Activated CD8-positive, alpha-beta T cell treated with anti-CD3 and anti-CD28 coated beads for 36 hours (primary cell): ENCODE measurements at regions of chr22 and their contacts with region 1.

Region 1: DNA sequence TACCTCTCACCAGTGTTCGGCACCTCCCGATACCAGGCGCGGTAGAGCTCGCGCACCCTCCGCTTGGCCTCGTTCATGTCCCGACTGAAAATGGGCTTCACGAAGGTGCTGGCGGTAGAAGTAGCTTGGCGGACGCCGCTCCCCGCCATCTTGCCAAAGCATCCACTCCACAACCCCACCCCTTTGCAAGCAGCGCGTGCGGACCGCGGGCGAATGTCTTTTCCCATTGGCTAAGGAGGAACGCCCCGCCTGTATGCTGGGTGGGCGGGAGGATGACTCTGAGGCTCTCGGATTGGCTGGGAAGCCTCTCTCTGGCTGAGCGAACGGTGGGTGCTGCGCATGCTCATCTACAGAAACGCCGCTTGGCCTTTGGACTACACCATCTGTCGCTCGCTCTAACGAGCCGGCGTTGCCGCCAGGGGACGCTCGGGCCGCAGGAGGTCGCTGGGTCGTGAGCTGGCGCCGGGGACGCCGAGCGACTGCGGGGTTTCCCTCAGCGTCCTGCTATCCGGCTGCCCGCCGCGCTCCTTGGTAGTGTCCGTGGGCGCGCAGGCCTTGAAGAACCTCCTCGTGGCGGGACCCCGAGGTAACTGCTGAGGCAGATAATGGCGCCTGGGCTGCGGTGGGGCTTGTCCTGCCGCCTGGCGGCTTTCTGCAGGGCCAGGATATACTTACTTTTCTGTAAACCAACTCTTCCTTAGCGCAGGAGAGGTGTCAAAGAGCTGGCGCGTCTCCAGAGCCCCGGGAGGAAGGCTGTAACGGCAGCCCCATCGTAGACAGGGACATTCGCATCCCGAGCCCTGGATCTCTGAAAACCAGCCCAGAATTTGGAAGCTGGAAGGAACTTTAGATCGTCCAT is at the start of gene NDUFA6:
- DNase-seq: peak; percentile 99
- ATAC-seq: peak; percentile 96
- H3K4me3 Mint-ChIP-seq: peak within 1 kb of the TSS; percentile 85
- H3K27ac Mint-ChIP-seq: peak within 1 kb of the TSS; percentile 99
- H3K4me1 Mint-ChIP-seq: peaks cover 28% of the 10 kb centered on the region
- H3K27me3 Mint-ChIP-seq: no peaks in the 10 kb centered on the region
- CTCF ChIP-seq: peak; percentile 83
- total RNA-seq, gene NDUFA6: 92.8 to 93.8 TPM

Region 2: GRCh38 chr22:41966607-41967240 is 124.1 kb before region 1 on chr22:
- CTCF ChIA-PET with region 1: interaction called, 10 read pairs
- POLR2A ChIA-PET with region 1: interaction called, 3 read pairs
- intact Hi-C with region 1: no loop called
- DNase-seq: peak; percentile 65
- ATAC-seq: peak; percentile 84
- H3K4me3 Mint-ChIP-seq: no peak overlapping the region
- H3K27ac Mint-ChIP-seq: no peak overlapping the region
- H3K4me1 Mint-ChIP-seq: no peaks in the 10 kb centered on the region
- H3K27me3 Mint-ChIP-seq: no peaks in the 10 kb centered on the region
- CTCF ChIP-seq: peak; percentile 28

Region 3: GRCh38 chr22:41992496-41992895 is 98.3 kb before region 1 on chr22:
- CTCF ChIA-PET with region 1: no interaction called
- POLR2A ChIA-PET with region 1: no interaction called
- intact Hi-C with region 1: no loop called
- DNase-seq: no peak
- ATAC-seq: no peak
- H3K4me3 Mint-ChIP-seq: no peak overlapping the region
- H3K27ac Mint-ChIP-seq: no peak overlapping the region
- H3K4me1 Mint-ChIP-seq: no peaks in the 10 kb centered on the region
- H3K27me3 Mint-ChIP-seq: no peaks in the 10 kb centered on the region
- CTCF ChIP-seq: no peak

Region 4: GRCh38 chr22:42079319-42080251 is 11.2 kb before region 1 on chr22 and contains the start of gene SMDT1:
- CTCF ChIA-PET with region 1: interaction called, 9 read pairs
- POLR2A ChIA-PET with region 1: interaction called, 118 read pairs
- intact Hi-C with region 1: no loop called
- DNase-seq: peak; percentile 98
- ATAC-seq: peak; percentile 92
- H3K4me3 Mint-ChIP-seq: peak within 1 kb of the TSS; percentile 94
- H3K27ac Mint-ChIP-seq: peak within 1 kb of the TSS; percentile 95
- H3K4me1 Mint-ChIP-seq: peaks cover 23% of the 10 kb centered on the region
- H3K27me3 Mint-ChIP-seq: no peaks in the 10 kb centered on the region
- CTCF ChIP-seq: no peak
- total RNA-seq, gene SMDT1: 51.7 to 61.2 TPM

Region 5: GRCh38 chr22:42101199-42101598 is 10.4 kb after region 1 on chr22:
- CTCF ChIA-PET with region 1: interaction called, 19 read pairs
- POLR2A ChIA-PET with region 1: interaction called, 12 read pairs
- intact Hi-C with region 1: no loop called
- DNase-seq: no peak
- ATAC-seq: no peak
- H3K4me3 Mint-ChIP-seq: no peak overlapping the region
- H3K27ac Mint-ChIP-seq: no peak overlapping the region
- H3K4me1 Mint-ChIP-seq: no peaks in the 10 kb centered on the region
- H3K27me3 Mint-ChIP-seq: no peaks in the 10 kb centered on the region
- CTCF ChIP-seq: no peak

Region 6: GRCh38 chr22:42114721-42115120 is 23.9 kb after region 1 on chr22:
- CTCF ChIA-PET with region 1: interaction called, 26 read pairs
- POLR2A ChIA-PET with region 1: interaction called, 12 read pairs
- intact Hi-C with region 1: no loop called
- DNase-seq: peak; percentile 34
- ATAC-seq: no peak
- H3K4me3 Mint-ChIP-seq: no peak overlapping the region
- H3K27ac Mint-ChIP-seq: no peak overlapping the region
- H3K4me1 Mint-ChIP-seq: peaks cover 8% of the 10 kb centered on the region
- H3K27me3 Mint-ChIP-seq: no peaks in the 10 kb centered on the region
- CTCF ChIP-seq: peak; percentile 25

Region 7: GRCh38 chr22:42258126-42258525 is 167.3 kb after region 1 on chr22:
- CTCF ChIA-PET with region 1: no interaction called
- POLR2A ChIA-PET with region 1: no interaction called
- intact Hi-C with region 1: no loop called
- DNase-seq: no peak
- ATAC-seq: no peak
- H3K4me3 Mint-ChIP-seq: no peak overlapping the region
- H3K27ac Mint-ChIP-seq: no peak overlapping the region
- H3K4me1 Mint-ChIP-seq: peaks cover 73% of the 10 kb centered on the region
- H3K27me3 Mint-ChIP-seq: no peaks in the 10 kb centered on the region
- CTCF ChIP-seq: no peak

Region 8: GRCh38 chr22:42437488-42438292 is 346.9 kb after region 1 on chr22:
- CTCF ChIA-PET with region 1: interaction called, 14 read pairs
- POLR2A ChIA-PET with region 1: interaction called, 23 read pairs
- intact Hi-C with region 1: loop called (anchors 10 kb)
- DNase-seq: peak; percentile 84
- ATAC-seq: peak; percentile 96
- H3K4me3 Mint-ChIP-seq: peak overlapping the region; percentile 68
- H3K27ac Mint-ChIP-seq: no peak overlapping the region
- H3K4me1 Mint-ChIP-seq: peaks cover 17% of the 10 kb centered on the region
- H3K27me3 Mint-ChIP-seq: peaks cover 1% of the 10 kb centered on the region
- CTCF ChIP-seq: peak; percentile 94

Region 9: DNA sequence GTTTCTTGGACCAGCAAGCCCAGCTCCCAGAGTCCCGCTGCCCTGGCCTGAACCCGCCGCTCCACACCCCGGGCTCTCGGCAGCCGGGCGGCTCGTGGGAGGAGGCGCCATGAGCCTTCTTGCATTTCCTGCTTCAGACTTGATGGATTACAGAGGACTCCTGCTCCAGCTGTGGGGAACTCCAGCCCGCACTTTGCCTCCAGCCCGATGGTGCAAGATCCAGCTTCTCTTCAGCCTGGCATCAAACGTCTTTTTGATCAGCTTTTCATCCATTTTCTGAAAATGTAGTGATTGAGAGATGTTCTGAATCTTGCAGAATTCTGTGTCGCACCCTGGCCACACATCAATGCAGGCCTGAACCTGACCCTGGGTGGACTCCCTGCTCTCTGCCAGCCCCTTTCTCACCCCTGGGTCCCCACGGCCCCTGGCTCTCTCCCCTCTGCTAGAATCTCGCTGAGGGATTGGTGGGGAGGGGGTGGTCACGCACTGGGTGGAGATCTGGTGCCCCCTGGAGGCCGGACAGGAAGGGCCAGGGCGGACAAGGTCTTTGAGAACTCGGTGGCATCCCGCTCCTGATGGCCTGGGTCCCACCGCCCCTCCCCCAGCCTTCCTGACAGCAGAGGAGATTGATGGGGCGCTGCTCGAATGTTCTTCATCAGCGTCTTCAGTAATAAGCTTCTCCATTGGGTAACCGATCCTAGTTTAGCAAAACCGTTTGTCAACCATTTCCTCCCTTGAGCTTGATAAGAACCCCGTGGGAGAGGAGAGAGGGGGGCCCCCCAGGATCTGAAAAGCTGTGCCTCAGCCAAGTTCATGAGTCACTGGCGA is 353.5 kb after region 1 on chr22:
- CTCF ChIA-PET with region 1: interaction called, 26 read pairs
- POLR2A ChIA-PET with region 1: interaction called, 23 read pairs
- intact Hi-C with region 1: loop called (anchors 10 kb)
- DNase-seq: peak; percentile 89
- ATAC-seq: peak; percentile 86
- H3K4me3 Mint-ChIP-seq: peak overlapping the region; percentile 68
- H3K27ac Mint-ChIP-seq: peak overlapping the region; percentile 86
- H3K4me1 Mint-ChIP-seq: peaks cover 28% of the 10 kb centered on the region
- H3K27me3 Mint-ChIP-seq: no peaks in the 10 kb centered on the region
- CTCF ChIP-seq: peak; percentile 74